Posterior vena cava (tissue), 2 donors: ENCODE measurements at regions of chr12 and their contacts with region 1.

Region 1: DNA sequence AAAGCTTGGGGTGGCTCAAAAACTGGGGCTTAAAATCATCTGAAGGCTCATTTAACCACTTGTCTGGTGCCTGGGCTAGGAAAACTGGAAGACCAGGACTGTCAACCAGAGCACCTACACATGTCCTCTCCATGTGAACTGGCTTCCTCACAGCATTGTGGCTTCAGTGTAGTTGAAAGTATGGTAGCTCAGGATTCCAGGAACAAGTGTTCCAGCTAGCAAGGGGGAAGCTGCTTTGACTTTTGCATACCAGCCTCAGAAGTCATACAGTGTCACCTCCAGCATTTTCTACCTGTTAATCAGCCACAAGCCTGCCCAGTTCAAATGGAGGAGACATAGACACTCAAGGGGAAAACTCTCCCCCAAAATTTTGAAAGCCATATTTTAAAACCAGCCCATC is 212.9 kb upstream of the CAND1 start:
- DNase-seq: no peak

Region 2: DNA sequence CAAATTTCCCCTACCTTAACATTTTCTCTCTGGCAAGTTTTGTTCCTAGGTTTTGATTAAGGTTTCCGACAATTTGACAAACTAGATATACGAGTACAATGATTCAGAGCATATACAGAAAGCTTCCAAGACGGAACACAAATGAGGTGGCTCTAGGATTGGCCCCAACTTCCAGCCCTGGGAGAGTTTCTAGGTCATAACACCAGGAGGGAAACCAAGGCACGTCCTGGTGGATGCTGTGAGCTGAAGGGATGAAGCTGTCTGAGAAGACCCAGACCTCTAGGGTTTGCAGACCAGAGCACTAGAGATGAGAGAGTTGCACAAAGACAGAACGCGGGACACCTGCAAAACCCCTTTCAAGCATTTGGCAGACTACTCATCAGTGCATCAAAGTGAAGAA is 161.4 kb after region 1 on chr12:
- intact Hi-C with region 1: loop called in 1 of 2 experiments (anchors 5 kb)
- DNase-seq: no peak